Body of pancreas (tissue), 4 donors: ENCODE measurements at regions of chr12 and their contacts with region 1.

Region 1: GRCh38 chr12:57175428-57176138 is 28.2 kb upstream of the LRP1-AS start:
- DNase-seq: peak; percentile 69 to 78 (median 75)
- ATAC-seq: peak; percentile 65
- H3K4me3 ChIP-seq: no peak overlapping the region
- H3K27ac ChIP-seq: no peak overlapping the region
- H3K4me1 ChIP-seq: no peaks in the 10 kb centered on the region
- H3K27me3 ChIP-seq: no peaks in the 10 kb centered on the region
- CTCF ChIP-seq: peak; percentile 12 to 61 (median 57)
- POLR2A ChIP-seq: no peak

Region 2: DNA sequence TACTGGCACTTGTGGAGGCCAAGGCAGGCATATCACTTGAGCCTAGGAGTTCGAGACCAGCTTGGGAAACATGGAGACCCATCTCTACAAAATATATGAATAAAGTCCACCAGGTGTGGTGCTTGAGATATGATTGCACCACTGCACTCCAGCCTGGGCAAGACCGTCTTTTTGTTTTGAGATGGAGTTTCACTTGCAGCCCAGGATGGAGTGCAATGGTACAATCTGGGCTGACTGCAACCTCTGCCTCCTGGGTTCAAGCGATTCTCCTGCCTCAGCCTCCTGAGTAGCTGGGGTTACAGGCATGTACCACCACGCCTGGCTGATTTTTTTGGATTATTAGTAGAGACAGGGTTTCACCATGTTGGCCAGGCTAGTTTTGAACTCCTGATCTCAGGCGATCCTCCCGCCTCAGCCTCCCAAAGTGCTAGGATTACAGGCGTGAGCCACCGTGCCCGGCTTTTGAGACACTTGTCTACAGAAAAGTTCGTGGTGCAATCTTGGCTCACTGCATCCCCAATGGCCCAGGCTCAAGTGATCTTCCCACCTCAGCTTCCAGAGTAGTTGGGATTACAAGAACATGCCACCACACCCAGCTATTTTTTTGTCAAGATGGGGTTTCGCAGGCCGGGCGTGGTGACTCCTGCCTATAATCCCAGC is 513.5 kb before region 1 on chr12:
- intact Hi-C with region 1: no loop called
- DNase-seq: no peak
- ATAC-seq: no peak
- H3K4me3 ChIP-seq: no peak overlapping the region
- H3K27ac ChIP-seq: no peak overlapping the region
- H3K4me1 ChIP-seq: no peaks in the 10 kb centered on the region
- H3K27me3 ChIP-seq: no peaks in the 10 kb centered on the region
- CTCF ChIP-seq: no peak
- POLR2A ChIP-seq: no peak

Region 3: DNA sequence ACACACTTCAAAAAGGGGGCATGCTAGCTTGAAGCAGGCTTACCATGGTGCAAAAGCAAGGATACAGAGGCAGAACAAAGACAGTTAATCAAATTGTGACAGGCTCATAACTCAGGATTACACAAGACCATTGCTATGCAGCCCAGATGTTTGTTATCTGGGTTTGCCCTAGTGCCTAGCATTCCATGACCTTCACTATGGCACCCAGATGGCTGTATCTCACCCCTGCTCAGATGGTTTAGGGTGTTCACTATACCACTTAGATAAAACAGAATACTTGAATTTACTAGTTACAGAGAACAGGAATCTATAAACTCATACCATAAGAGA is 297.6 kb before region 1 on chr12:
- intact Hi-C with region 1: no loop called
- DNase-seq: no peak
- ATAC-seq: no peak
- H3K4me3 ChIP-seq: no peak overlapping the region
- H3K27ac ChIP-seq: no peak overlapping the region
- H3K4me1 ChIP-seq: no peaks in the 10 kb centered on the region
- H3K27me3 ChIP-seq: no peaks in the 10 kb centered on the region
- CTCF ChIP-seq: no peak
- POLR2A ChIP-seq: no peak

Region 4: DNA sequence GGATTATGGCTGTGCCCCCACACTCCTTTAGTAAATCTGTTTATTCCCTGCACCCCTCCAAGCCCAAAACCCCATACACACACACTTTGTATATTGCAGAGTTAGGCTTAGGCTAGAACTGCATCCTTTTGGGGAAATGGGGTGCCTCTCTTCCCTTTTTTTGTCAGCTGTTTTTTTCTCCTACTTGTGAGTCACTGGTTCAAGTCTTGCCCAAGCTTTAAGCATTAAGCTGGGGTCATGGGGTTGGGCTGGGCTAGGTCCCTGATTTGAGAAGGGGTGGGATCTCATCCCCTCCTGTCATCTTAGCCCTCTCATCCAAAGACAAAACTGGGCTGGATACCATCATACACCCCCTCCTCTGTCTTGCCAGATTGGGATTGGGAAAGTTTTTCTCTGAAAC is 45.7 kb before region 1 on chr12:
- intact Hi-C with region 1: loop called (anchors 5 kb)
- DNase-seq: peak in 1 of 4 donors; percentile 49
- ATAC-seq: no peak
- H3K4me3 ChIP-seq: peak overlapping the region in 1 of 2 donors; percentile 63
- H3K27ac ChIP-seq: peak overlapping the region in 3 of 4 donors; percentile 9 to 94 (median 33)
- H3K4me1 ChIP-seq: peaks cover 15% of the 10 kb centered on the region
- H3K27me3 ChIP-seq: no peaks in the 10 kb centered on the region
- CTCF ChIP-seq: no peak
- POLR2A ChIP-seq: peak in 1 of 3 donors; percentile 19